CD8-positive, alpha-beta memory T cell (primary cell): ENCODE measurements at regions of chr6 and their contacts with region 1.

Region 1: GRCh38 chr6:33430991-33431879 is 11.4 kb downstream of the SYNGAP1 start:
- DNase-seq: peak; percentile 72 to 93 (median 83)
- H3K4me3 ChIP-seq: peak overlapping the region; percentile 34
- H3K4me3 Mint-ChIP-seq: peak overlapping the region; percentile 88 to 94 (median 89)
- H3K27ac ChIP-seq: peak overlapping the region; percentile 36
- H3K27ac Mint-ChIP-seq: peak overlapping the region; percentile 82 to 98 (median 96)
- H3K4me1 ChIP-seq: peaks cover 56% of the 10 kb centered on the region
- H3K4me1 Mint-ChIP-seq: peaks cover 63 to 71% (median 66%) of the 10 kb centered on the region in 3 donors
- H3K27me3 ChIP-seq: no peaks in the 10 kb centered on the region
- H3K27me3 Mint-ChIP-seq: peaks cover 0 to 11% of the 10 kb centered on the region in 2 donors

Region 2: DNA sequence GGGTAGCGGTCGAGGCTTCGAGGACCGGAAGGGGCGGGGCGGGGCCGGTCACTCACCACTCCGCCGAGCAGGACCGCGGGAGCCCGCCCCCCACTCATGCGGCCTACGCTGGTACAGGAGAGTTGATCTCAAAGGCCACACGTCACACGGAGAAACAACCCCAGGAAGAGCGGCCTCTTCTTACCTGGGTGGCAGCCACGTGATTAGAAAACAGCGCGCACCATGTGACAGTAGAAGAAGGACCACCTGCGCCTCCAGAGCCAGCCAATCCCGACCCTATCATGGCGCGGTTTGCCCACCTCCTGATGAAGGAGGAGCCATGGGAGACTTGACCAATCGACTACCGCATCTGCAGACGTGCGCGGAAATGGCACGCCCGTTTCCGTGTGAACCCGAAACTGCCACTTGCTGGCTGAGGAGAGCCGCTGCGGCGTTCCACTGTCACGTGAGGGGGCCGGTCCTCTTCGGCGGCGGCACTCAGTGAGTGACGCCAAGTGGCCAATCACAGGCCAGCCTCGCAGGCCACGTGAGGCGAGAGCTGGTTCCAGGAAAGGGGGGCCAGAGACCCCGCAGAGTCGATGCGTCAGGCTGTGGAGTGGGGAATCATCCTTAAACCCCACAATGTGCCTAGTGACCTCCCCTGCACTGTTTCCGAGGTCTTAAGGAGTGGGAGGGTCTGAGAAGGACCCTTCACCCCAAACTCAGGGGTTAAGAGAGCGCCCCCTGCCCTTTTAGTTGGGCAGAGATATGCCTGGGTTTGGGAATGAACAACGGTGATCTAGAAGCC is 13.1 kb before region 1 on chr6 and contains the start of gene CUTA:
- CTCF ChIA-PET with region 1: interaction called, 15 read pairs
- POLR2A ChIA-PET with region 1: interaction called, 8 read pairs
- DNase-seq: peak; percentile 99 to 100 (median 99)
- H3K4me3 ChIP-seq: peak within 1 kb of the TSS; percentile 94
- H3K4me3 Mint-ChIP-seq: peak within 1 kb of the TSS; percentile 85 to 95 (median 92)
- H3K27ac ChIP-seq: peak within 1 kb of the TSS; percentile 94
- H3K27ac Mint-ChIP-seq: peak within 1 kb of the TSS; percentile 97 to 100 (median 100)
- H3K4me1 ChIP-seq: peaks cover 52% of the 10 kb centered on the region
- H3K4me1 Mint-ChIP-seq: peaks cover 63 to 69% (median 65%) of the 10 kb centered on the region in 3 donors
- H3K27me3 ChIP-seq: no peaks in the 10 kb centered on the region
- H3K27me3 Mint-ChIP-seq: peaks cover 0 to 3% of the 10 kb centered on the region in 2 donors
- total RNA-seq, gene CUTA: 149 to 164 TPM